Left ventricle myocardium superior (tissue), 1 donor: ENCODE measurements at regions of chr5 and their contacts with region 1.

Region 1: DNA sequence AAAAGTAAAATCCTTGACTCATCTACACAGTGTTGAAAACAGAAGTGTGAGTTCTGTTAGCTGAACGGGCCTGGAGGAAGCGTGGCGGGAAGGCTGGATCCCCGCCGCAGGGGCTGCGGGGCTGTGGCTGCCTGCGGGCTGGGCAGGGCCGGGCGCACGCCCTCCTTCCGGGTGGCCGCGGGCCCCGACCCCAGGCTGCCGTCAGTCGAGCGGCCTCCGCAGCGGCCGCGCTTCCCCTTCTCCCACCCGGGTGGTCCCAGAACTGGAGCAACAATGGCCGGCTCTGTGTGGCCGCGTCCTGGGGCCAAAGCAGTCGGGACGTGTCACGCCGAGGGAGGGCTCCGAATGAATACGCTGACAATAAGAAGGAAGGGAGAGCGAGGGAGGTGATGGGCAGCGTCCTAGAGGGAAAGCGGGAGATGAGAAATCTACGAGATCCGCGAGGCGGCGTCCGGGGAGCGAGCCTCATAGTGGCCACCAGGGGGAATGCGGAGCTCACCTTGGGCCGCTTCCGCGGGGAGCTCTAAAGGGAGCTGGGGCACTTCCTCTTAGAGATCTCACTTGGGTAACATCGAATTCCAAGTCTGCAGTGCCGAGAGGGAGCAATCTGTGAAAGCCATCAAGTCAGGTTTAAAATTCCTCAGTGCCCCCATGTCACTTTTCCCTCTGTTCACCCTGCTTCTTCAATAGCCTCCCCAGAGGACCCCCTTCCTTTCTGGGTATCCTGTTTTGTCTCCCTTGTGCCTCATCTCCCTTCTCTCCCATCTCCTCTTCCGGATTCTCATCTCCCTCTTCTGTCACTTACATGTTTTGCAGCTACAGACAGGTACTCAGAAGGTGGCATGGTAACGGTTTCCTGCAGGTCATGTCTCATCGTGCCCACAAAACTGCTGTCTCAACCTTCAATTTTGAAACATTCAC is 83.9 kb downstream of the SLC1A3 start:
- DNase-seq: peak; percentile 88
- ATAC-seq: peak; percentile 72

Region 2: DNA sequence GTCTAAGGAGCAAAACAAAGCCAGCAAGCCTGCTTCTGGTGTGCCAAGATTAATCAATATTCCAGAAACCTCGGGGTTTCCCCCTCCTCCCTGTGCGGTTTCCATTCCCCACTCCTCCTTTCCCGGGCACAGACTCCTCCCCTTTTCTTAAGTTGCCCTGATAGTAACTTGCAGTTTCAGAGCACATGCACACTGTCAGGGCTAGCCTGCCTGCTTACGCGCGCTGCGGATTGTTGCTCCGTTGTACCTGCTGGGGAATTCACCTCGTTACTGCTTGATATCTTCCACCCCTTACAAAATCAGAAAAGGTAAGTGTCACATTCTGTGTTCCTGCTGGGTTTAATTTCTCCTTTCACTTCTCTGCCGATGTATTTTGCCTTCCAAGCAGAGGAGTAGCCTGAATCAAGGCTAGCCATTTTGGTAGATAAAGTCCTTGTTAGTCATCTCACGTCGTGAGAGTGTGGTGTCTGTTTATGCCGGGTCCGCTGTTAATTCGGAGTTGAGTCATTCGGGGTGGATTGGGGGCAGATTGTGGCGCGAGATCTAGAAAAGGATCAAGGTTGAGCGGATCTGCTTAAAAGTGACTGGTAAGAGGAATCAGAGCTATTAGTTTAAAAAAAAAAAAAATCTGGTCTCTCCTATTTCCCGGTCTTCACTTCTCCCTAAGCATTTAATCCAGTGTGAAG is 83.7 kb before region 1 on chr5 and contains the start of gene SLC1A3:
- intact Hi-C with region 1: loop called (anchors 10 kb)
- DNase-seq: peak; percentile 68
- ATAC-seq: peak; percentile 88
- total RNA-seq, gene SLC1A3: 105 TPM